Heart left ventricle (tissue), 16 donors: ENCODE measurements at regions of chr5 and their contacts with region 1.

Region 1: DNA sequence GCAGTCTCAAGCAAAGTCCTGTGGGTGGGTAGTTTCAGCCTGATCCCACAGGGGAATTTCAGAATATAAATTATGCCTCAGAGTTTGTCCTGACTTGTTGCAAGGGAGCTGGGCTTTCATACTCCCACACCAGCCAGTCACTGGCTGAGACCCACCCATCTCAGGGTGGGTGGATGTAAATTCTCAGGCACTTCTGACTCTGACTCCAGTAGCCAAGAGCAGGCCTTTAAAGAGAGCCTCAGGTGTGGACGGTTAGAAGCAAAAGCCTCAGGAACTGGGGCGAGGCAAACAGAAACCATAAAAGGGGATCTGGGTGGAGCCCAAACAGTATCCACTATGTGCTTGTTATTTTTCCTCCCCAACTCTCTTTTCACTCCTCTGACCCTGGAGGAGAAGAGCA is 28.6 kb upstream of the FBXW11 start:
- DNase-seq: no peak
- ATAC-seq: no peak
- H3K4me3 ChIP-seq: no peak overlapping the region
- H3K27ac ChIP-seq: no peak overlapping the region
- H3K4me1 ChIP-seq: peaks cover 0 to 4% (median under 1%) of the 10 kb centered on the region in 12 donors
- H3K27me3 ChIP-seq: no peaks in the 10 kb centered on the region
- CTCF ChIP-seq: no peak
- POLR2A ChIP-seq: no peak

Region 2: GRCh38 chr5:171907725-171908343 is 127.2 kb before region 1 on chr5:
- intact Hi-C with region 1: loop called (anchors 1 to 5 kb)
- DNase-seq: peak in 3 of 5 donors; percentile 30 to 49 (median 40)
- ATAC-seq: peak; percentile 49 to 85 (median 79)
- H3K4me3 ChIP-seq: no peak overlapping the region
- H3K27ac ChIP-seq: no peak overlapping the region
- H3K4me1 ChIP-seq: peaks cover 0 to 44% (median 27%) of the 10 kb centered on the region in 12 donors
- H3K27me3 ChIP-seq: no peaks in the 10 kb centered on the region
- CTCF ChIP-seq: peak; percentile 68 to 87 (median 78)
- POLR2A ChIP-seq: no peak

Region 3: DNA sequence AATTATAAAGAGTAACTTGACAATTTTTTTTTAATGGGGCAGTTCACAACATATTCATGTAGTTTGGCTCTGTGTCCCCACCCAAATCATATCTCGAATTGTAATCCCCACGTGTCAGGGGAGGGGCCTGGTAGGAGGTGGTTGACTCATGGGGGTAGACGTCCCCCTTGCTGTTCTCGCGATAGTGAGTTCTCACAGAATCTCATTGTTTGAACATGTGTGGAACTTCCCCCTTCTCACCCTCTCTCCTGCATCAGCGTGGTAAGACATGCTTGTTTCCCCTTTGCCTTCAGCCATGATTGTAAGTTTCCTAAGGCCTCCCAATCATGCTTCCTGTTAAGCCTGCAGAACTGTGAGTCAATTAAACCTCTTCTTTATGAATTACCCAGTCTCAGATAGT is 69.3 kb before region 1 on chr5:
- intact Hi-C with region 1: no loop called
- DNase-seq: no peak
- ATAC-seq: peak in 2 of 4 donors; percentile 10 to 24
- H3K4me3 ChIP-seq: no peak overlapping the region
- H3K27ac ChIP-seq: peak overlapping the region in 6 of 12 donors; percentile 2 to 38 (median 28)
- H3K4me1 ChIP-seq: peaks cover 6 to 77% (median 43%) of the 10 kb centered on the region in 12 donors
- H3K27me3 ChIP-seq: no peaks in the 10 kb centered on the region
- CTCF ChIP-seq: no peak
- POLR2A ChIP-seq: no peak